ENCODE measurements at regions of chr7 and their contacts with region 1.

Region 1: DNA sequence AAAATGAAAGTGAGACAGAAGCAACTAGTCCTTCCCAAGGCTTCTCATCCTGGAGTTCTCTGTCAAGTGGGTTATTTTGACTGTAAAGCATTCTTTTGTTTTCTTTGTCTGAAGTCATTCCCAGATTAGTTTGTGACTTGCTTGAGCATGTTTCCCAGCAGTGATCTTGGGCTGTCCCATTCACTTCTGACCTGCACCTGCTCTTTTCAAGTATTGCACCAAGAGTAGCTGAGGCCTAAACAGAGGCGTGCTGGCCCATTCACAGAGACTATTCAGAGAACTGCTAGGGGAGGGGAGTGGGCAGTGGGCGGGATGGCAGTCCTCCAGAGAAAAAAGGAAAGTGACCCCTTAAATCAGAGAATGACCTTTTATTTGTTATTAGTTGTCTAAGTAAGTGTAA is 61.3 kb downstream of the CACNA2D1 start:
- DNase-seq: no peak
- ATAC-seq: no peak
- H3K4me3 ChIP-seq: no peak overlapping the region
- H3K27ac ChIP-seq: no peak overlapping the region
- H3K4me1 ChIP-seq: no peaks in the 10 kb centered on the region
- H3K27me3 ChIP-seq: no peaks in the 10 kb centered on the region
- CTCF ChIP-seq: no peak
- EP300 ChIP-seq: no peak
- POLR2A ChIP-seq: no peak
- RAD21 ChIP-seq: no peak

Region 2: DNA sequence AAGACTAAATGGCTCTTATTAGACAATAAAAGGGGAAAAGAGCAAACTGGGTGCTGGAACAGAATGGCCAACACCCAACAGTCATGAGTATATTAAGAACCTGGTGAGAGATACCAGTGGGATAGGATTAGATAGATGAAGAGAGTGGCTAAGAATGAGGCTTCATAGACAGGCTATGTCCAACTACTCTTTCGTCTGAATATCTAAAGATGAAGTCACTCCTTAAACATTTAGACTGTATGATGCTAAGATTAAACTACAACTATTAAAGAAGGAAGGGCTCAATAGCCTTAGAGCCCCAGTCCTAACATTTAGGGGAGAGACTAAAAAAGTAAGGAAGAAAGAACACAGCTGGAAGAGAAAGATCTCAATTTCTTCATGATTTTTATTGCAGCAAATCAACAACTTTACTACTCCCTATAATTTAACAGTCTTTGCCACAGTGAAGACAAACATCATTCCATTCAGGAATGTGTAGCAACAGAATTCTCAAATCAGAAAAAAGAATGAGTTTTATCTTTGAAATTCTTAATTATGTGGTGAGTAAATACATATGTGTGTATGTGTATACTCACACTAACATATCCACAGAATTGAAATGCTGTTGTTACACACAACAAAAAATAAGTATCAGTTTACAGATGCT is 15.7 kb after region 1 on chr7:
- CTCF ChIA-PET with region 1: interaction called, 3 read pairs
- POLR2A ChIA-PET with region 1: interaction called, 24 read pairs
- RAD21 ChIA-PET with region 1: interaction called, 53 read pairs
- SMC1A ChIA-PET with region 1: interaction called, 158 read pairs
- in situ Hi-C with region 1: no loop called
- intact Hi-C with region 1: no loop called
- DNase-seq: no peak
- ATAC-seq: peak; percentile 42
- H3K4me3 ChIP-seq: no peak overlapping the region
- H3K27ac ChIP-seq: no peak overlapping the region
- H3K4me1 ChIP-seq: no peaks in the 10 kb centered on the region
- H3K27me3 ChIP-seq: no peaks in the 10 kb centered on the region
- CTCF ChIP-seq: no peak
- EP300 ChIP-seq: no peak
- POLR2A ChIP-seq: no peak
- RAD21 ChIP-seq: no peak

Region 3: DNA sequence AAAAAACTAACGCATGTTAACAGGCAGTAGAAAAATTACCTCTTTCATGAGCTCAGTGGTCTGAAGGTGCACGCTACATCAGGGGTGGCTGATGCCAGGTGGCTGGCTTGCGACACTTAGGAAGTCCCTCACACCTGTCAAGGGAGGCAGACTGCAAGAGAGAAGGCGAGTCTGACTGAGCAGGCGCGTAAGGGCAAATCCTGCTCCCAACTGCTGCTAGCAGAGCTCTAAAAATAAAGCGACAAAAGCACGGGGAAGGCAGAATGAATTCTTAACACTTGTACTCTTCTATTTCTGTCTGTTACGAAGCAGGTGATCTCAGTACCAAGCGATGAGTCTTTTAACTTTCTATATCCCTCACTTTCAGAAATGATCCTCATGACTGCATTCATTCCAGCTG is 28.2 kb after region 1 on chr7:
- CTCF ChIA-PET with region 1: no interaction called
- POLR2A ChIA-PET with region 1: interaction called, 4 read pairs
- RAD21 ChIA-PET with region 1: interaction called, 6 read pairs
- SMC1A ChIA-PET with region 1: interaction called, 16 read pairs
- in situ Hi-C with region 1: no loop called
- intact Hi-C with region 1: no loop called
- DNase-seq: no peak
- ATAC-seq: peak; percentile 5; the same call in 1 of the 3 replicates
- H3K4me3 ChIP-seq: no peak overlapping the region
- H3K27ac ChIP-seq: no peak overlapping the region
- H3K4me1 ChIP-seq: no peaks in the 10 kb centered on the region
- H3K27me3 ChIP-seq: no peaks in the 10 kb centered on the region
- CTCF ChIP-seq: no peak
- EP300 ChIP-seq: no peak
- POLR2A ChIP-seq: no peak
- RAD21 ChIP-seq: no peak

Region 4: GRCh38 chr7:82433507-82433906 is 51.2 kb after region 1 on chr7:
- CTCF ChIA-PET with region 1: interaction called, 5 read pairs
- POLR2A ChIA-PET with region 1: interaction called, 20 read pairs
- RAD21 ChIA-PET with region 1: interaction called, 9 read pairs
- SMC1A ChIA-PET with region 1: interaction called, 22 read pairs
- in situ Hi-C with region 1: no loop called
- intact Hi-C with region 1: loop called (anchors 2 kb)
- DNase-seq: no peak
- ATAC-seq: peak; percentile 27
- H3K4me3 ChIP-seq: no peak overlapping the region
- H3K27ac ChIP-seq: no peak overlapping the region
- H3K4me1 ChIP-seq: no peaks in the 10 kb centered on the region
- H3K27me3 ChIP-seq: no peaks in the 10 kb centered on the region
- CTCF ChIP-seq: no peak
- EP300 ChIP-seq: 0 out of 4 replicates have a peak, but pooled peaks of 1 of the 2 experiments have one; percentile 14
- POLR2A ChIP-seq: no peak
- RAD21 ChIP-seq: no peak